PC-3 (cell line): ENCODE measurements at regions of chr9 and their contacts with region 1.

Region 1: GRCh38 chr9:4750023-4750673 is 9.1 kb upstream of the AK3 start:
- DNase-seq: peak; percentile 75
- ATAC-seq: peak; percentile 37; the same call in 1 of the 2 replicates
- H3K4me3 ChIP-seq: no peak overlapping the region
- H3K27ac ChIP-seq: no peak overlapping the region
- H3K4me1 ChIP-seq: no peaks in the 10 kb centered on the region
- H3K27me3 ChIP-seq: no peaks in the 10 kb centered on the region
- CTCF ChIP-seq: peak; percentile 70

Region 2: DNA sequence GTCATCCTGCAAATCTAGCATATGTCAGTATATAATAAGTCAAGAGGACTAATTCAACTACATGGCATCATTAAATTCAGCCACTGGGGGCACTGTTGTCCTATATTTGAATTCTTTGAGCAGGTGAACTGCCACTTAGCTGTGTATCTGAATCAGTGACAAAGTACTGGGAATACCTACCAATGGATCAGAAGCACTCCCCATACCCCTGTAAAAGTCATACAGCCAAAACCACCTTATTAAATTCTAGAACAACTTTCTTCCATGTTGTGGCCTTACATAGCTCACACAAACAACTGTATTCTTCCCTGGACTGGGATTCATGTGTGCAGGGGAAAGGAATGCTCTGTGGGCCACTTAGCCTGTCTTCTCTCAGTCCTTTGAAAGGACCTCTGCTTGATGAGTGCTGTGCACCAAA is 145.5 kb before region 1 on chr9:
- CTCF ChIA-PET with region 1: no interaction called
- POLR2A ChIA-PET with region 1: no interaction called
- intact Hi-C with region 1: loop called (anchors 1 kb)
- DNase-seq: peak; percentile 86
- ATAC-seq: peak; percentile 90
- H3K4me3 ChIP-seq: no peak overlapping the region
- H3K27ac ChIP-seq: no peak overlapping the region
- H3K4me1 ChIP-seq: no peaks in the 10 kb centered on the region
- H3K27me3 ChIP-seq: no peaks in the 10 kb centered on the region
- CTCF ChIP-seq: peak; percentile 72

Region 3: DNA sequence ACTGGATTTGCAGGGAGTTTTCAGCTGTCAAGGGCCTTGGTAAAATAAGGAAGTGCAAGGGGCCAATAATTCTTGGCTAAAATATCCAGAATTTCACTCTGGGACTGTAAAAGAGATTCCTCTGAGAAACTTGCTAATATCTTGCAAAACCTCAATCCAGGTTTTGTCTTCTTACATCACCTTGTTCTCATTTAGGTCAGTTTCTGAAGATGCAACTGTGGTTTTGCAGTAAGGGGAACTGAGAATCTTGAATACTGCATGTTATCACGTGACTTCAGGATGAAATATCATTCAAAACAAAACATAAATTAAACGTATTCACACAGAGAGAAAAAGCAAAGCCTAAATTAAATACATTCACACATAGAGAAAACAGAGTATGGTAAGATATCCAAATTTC is 843.8 kb after region 1 on chr9:
- CTCF ChIA-PET with region 1: no interaction called
- POLR2A ChIA-PET with region 1: no interaction called
- intact Hi-C with region 1: loop called (anchors 10 kb)
- DNase-seq: no peak
- ATAC-seq: no peak
- H3K4me3 ChIP-seq: no peak overlapping the region
- H3K27ac ChIP-seq: no peak overlapping the region
- H3K4me1 ChIP-seq: no peaks in the 10 kb centered on the region
- H3K27me3 ChIP-seq: no peaks in the 10 kb centered on the region
- CTCF ChIP-seq: no peak